ENCODE measurements at regions of chr3 and their contacts with region 1.

Region 1: GRCh38 chr3:52705688-52706686 is at the starts of genes GLT8D1 and SPCS1:
- DNase-seq: peak; percentile 93
- ATAC-seq: peak; percentile 92
- H3K4me3 Mint-ChIP-seq: peak within 1 kb of the TSS; percentile 98
- H3K27ac Mint-ChIP-seq: peak within 1 kb of the TSS; percentile 92
- H3K4me1 Mint-ChIP-seq: peaks cover 27% of the 10 kb centered on the region
- H3K27me3 Mint-ChIP-seq: no peaks in the 10 kb centered on the region
- total RNA-seq, gene GLT8D1: 44.6 to 45.7 TPM
- total RNA-seq, gene SPCS1: 90.1 to 90.4 TPM

Region 2: DNA sequence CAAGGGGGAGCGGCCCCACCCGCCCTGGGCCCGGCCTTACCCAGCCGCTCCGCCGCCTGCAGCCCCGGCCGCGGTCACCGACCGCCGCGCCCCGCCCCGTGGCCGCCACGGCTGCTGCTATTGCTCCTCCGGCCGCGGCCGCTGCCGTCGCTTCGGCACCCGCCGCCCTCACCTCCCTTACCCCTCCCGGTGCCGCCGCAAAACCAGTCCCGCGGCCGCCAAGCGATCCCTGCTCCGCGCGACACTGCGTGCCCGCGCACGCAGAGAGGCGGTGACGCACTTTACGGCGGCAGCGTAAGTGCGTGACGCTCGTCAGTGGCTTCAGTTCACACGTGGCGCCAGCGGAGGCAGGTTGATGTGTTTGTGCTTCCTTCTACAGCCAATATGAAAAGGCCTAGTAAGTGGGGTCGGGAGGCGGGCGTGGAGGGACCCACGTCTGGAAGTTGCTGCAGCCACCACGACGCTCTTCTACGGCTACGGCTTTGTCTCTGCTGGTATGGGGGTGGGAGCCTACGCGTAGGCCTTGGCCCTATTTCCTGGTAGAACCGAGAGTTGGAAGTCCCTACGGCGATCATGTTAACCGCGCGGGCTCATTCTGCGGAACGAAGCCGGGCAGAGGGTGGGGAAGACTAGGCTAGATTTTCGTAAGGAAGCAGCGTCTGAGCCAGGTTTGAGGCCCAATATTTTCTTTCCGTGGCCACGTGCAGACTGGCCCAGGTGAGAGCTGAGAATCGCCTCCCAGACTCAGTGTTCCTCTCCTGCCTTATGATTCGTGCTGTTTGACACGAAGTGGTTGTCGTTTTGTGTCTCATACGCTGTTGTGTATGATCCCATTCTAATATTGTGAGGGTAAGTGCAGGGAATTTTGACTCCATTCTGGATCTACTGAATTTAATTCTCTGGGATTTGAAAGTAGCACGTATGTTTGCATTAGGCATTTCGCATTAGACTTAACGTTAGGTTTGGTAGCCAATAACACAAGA is 20.0 kb before region 1 on chr3 and contains the starts of genes GNL3 and PBRM1:
- POLR2A ChIA-PET with region 1: interaction called, 38 read pairs
- DNase-seq: peak; percentile 94
- ATAC-seq: peak; percentile 80
- H3K4me3 Mint-ChIP-seq: peak within 1 kb of the TSS; percentile 99
- H3K27ac Mint-ChIP-seq: peak within 1 kb of the TSS; percentile 94
- H3K4me1 Mint-ChIP-seq: peaks cover 41% of the 10 kb centered on the region
- H3K27me3 Mint-ChIP-seq: no peaks in the 10 kb centered on the region
- total RNA-seq, gene GNL3: 72.5 to 75.9 TPM
- total RNA-seq, gene PBRM1: 73.5 to 77.0 TPM

Region 3: DNA sequence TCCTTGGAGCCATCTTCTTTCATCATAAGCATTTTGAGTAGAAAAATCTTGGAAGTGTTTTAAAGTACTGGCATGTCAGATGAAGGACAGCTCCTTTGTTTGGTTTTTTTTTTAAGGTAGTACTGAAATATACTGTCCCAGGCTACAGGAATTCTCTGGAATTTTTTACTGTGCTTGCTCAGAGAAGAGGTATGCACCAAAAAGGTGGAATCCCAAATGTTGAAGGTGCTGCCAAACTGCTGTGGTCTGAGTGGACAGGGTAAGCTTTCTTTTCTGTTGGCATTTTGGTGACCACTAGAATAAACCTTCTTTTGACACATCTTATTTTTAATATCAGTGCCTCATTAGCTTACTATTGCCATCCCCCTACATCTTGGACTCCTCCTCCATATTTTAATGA is 12.9 kb before region 1 on chr3:
- POLR2A ChIA-PET with region 1: interaction called, 38 read pairs
- DNase-seq: no peak
- ATAC-seq: no peak
- H3K4me3 Mint-ChIP-seq: no peak overlapping the region
- H3K27ac Mint-ChIP-seq: no peak overlapping the region
- H3K4me1 Mint-ChIP-seq: peaks cover 20% of the 10 kb centered on the region
- H3K27me3 Mint-ChIP-seq: no peaks in the 10 kb centered on the region

Region 4: DNA sequence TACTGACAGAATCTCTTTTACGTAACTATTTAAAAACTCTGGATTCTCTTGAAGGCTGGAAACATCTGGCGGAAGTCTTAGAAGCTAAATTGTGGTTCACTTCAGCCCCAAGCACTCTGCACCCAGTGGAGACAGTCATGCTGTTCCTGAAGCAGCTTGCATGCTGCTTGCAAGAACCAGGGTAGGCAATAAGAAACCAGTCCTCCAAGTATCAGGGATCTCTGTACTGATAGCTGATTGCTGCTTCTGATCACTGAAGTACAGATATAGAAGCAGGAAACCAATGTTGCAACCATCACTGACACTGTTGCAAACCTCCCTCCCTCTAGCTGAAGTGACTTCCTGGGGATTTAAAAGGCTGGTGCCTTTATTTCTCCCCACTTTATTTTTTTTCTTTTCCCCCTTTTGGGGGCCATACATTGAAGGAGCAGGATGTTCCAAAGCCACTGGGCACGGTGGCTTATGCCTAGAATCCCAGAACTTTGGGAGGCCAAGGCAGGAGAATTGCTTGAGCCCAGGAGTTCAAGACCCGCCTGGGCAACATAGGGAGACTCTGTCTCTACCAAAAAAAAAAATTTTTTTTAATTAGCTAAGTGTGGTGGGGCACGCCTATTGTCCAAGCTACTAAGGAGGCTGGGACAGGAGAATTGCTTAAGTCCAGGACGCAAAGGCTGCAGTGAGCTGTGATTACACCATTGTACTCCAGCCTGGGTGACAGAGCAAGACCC is 15.2 kb after region 1 on chr3:
- POLR2A ChIA-PET with region 1: interaction called, 16 read pairs
- DNase-seq: no peak
- ATAC-seq: peak; percentile 97
- H3K4me3 Mint-ChIP-seq: peak overlapping the region; percentile 67
- H3K27ac Mint-ChIP-seq: peak overlapping the region; percentile 89
- H3K4me1 Mint-ChIP-seq: peaks cover 16% of the 10 kb centered on the region
- H3K27me3 Mint-ChIP-seq: no peaks in the 10 kb centered on the region

Region 5: DNA sequence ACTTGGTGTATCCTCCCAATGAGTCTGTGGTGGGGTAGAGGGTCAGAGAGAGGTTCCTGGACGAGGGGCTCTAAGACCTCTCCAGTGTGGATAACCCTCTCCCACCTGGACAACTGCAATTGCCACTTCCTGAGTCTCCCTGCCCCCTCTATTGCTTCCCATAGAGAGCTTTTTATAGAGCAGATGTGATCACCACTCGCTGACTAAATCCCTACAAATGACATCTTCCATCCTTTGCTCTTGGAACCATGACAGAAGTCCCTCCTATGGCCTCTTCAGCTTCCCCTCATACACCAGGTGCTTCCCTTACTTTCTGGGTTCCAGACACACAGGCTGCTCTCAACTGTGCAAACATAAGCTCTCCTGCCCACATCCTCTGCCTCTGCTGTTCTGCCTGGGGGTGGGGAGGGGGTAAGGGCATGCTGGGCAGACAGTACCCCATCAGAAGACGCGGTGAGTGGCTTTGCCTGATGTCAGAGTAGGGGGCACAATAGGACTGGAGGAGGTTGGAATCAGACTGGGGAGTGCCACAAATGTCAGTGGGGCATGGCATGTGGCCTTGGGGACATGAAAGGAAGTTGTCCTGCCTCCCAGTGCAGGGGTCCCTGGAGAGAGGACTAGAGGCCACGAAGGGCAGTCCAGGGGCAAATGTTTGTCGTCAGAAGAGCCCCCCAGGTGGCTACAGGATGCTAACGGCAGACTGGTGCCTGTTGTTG is 103.8 kb after region 1 on chr3:
- POLR2A ChIA-PET with region 1: no interaction called
- DNase-seq: no peak
- ATAC-seq: peak; percentile 62
- H3K4me3 Mint-ChIP-seq: no peak overlapping the region
- H3K27ac Mint-ChIP-seq: peak overlapping the region; percentile 7
- H3K4me1 Mint-ChIP-seq: peaks cover 16% of the 10 kb centered on the region
- H3K27me3 Mint-ChIP-seq: peaks cover 4% of the 10 kb centered on the region